Activated CD8-positive, alpha-beta T cell treated with anti-CD3 and anti-CD28 coated beads for 36 hours (primary cell): ENCODE measurements at regions of chr1 and their contacts with region 1.

Region 1: GRCh38 chr1:10494754-10495474 is 20.2 kb downstream of the PEX14 start:
- DNase-seq: peak; percentile 91
- ATAC-seq: peak; percentile 91
- H3K4me3 Mint-ChIP-seq: peak overlapping the region; percentile 68
- H3K27ac Mint-ChIP-seq: peak overlapping the region; percentile 92
- H3K4me1 Mint-ChIP-seq: peaks cover 48% of the 10 kb centered on the region
- H3K27me3 Mint-ChIP-seq: no peaks in the 10 kb centered on the region
- CTCF ChIP-seq: peak; percentile 99

Region 2: DNA sequence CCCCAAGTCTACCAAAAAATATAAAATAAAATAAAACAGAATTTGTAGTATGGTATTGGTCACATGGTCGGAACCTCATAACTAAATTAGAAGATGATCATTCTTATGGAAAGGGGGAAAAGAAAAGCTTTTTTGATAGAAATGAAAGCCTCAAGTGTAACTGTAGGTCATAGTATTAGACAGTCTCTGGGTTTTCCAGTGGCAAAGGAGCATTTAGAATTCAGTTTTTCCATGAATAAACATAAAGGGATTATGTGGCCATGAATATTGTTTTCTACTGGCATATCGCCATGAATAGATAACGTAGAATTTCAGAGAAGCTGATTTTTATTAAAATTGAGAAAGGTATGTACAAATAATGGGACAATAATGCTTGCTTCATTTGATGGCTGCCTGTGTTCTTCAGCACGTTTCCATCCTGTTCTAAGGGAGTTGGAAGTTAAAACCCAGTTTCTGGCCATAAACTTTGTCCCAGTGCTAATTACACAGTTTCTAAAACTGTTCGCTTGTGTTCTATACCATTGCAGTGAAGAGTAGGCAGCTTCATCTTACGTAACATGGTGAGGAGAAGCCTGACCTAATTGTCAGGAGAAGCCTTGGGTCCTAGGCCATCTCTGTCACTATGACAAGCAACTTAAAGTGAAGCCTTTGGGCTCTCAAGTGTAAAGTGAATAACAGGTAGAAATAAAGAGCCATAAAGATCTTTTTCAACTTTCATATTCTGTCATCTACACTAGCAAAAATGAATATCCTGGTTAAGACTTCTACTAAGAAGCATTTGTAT is 166.5 kb before region 1 on chr1:
- CTCF ChIA-PET with region 1: no interaction called
- POLR2A ChIA-PET with region 1: no interaction called
- intact Hi-C with region 1: no loop called
- DNase-seq: no peak
- ATAC-seq: no peak
- H3K4me3 Mint-ChIP-seq: no peak overlapping the region
- H3K27ac Mint-ChIP-seq: no peak overlapping the region
- H3K4me1 Mint-ChIP-seq: no peaks in the 10 kb centered on the region
- H3K27me3 Mint-ChIP-seq: no peaks in the 10 kb centered on the region
- CTCF ChIP-seq: no peak

Region 3: GRCh38 chr1:10430216-10431069 is 64.5 kb before region 1 on chr1 and contains the start of gene CENPS:
- CTCF ChIA-PET with region 1: interaction called, 100 read pairs
- POLR2A ChIA-PET with region 1: interaction called, 5 read pairs
- intact Hi-C with region 1: loop called (anchors 10 kb)
- DNase-seq: peak; percentile 95
- ATAC-seq: peak; percentile 90
- H3K4me3 Mint-ChIP-seq: peak within 1 kb of the TSS; percentile 88
- H3K27ac Mint-ChIP-seq: peak within 1 kb of the TSS; percentile 94
- H3K4me1 Mint-ChIP-seq: peaks cover 16% of the 10 kb centered on the region
- H3K27me3 Mint-ChIP-seq: no peaks in the 10 kb centered on the region
- CTCF ChIP-seq: peak; percentile 98
- total RNA-seq, gene CENPS: 18.3 to 19.4 TPM

Region 4: DNA sequence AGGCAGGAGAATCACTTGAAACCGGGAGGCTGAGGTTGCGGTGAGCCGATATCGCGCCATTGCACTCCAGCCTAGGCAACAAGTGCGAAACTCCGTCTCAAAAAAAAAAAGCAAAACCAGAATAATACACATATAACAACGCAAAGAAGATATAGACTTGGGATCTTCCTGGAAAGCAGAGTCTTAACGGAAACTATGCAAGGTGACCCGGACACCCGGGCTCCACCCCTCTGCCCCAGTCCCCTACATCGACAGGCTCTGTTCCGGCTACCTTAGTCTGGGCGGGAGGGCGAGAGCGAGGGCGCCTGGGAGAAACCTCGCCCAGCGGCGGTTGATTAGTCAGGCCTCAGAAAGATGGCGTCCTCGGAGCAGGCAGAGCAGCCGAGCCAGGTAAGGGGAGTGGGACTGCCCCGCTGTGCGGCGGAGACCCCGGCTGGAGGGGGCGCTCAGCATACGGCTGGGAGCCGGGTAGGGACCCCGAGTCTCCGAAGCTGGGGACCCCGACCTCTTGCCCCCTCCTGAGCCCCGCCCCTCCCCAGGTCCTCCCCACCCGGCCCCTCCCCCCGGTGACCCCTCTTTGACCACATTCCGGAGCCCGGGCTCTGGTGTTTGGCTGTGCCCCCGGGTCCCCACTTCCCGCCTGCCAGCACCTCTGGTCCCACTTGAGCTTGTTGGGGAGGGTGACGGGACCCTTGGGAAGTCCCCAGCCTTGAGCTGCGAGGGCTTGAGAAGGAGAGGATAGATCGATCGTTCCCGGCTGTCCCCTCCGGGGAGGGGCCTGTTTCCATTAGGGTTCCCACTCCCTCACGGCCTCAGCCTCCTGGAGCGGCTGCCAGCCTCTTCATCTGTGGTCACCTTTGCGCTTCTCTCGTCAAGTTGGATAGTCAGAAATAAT is 20.1 kb before region 1 on chr1 and contains the start of gene PEX14:
- CTCF ChIA-PET with region 1: interaction called, 32 read pairs
- POLR2A ChIA-PET with region 1: interaction called, 10 read pairs
- intact Hi-C with region 1: no loop called
- DNase-seq: peak; percentile 94
- ATAC-seq: peak; percentile 86
- H3K4me3 Mint-ChIP-seq: peak within 1 kb of the TSS; percentile 83
- H3K27ac Mint-ChIP-seq: peak within 1 kb of the TSS; percentile 90
- H3K4me1 Mint-ChIP-seq: peaks cover 42% of the 10 kb centered on the region
- H3K27me3 Mint-ChIP-seq: no peaks in the 10 kb centered on the region
- CTCF ChIP-seq: no peak
- total RNA-seq, gene PEX14: 18.0 to 18.5 TPM

Region 5: GRCh38 chr1:10507111-10507879 is 12.4 kb after region 1 on chr1:
- CTCF ChIA-PET with region 1: interaction called, 202 read pairs
- POLR2A ChIA-PET with region 1: interaction called, 15 read pairs
- intact Hi-C with region 1: no loop called
- DNase-seq: peak; percentile 69
- ATAC-seq: peak; percentile 57
- H3K4me3 Mint-ChIP-seq: no peak overlapping the region
- H3K27ac Mint-ChIP-seq: no peak overlapping the region
- H3K4me1 Mint-ChIP-seq: peaks cover 42% of the 10 kb centered on the region
- H3K27me3 Mint-ChIP-seq: no peaks in the 10 kb centered on the region
- CTCF ChIP-seq: peak; percentile 88

Region 6: DNA sequence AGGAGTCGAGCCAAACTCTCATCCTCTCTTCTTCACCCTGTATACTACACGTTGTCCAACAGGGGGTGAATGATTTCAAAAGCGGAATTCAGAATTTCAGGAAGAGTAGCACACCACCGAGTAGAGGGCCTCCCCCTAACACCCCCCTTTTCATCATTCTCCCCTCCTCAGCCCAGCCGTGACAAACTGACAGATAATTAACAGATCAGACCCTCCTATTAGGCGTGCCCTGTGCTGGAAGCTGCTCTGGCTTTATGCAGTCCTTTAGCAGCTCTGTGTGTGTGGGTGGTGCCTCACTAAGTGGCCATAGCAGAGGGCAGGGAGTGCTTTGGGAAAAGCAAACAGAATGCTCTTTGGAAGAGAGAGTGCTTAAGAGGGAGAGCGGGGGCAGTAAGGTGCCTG is 24.1 kb after region 1 on chr1:
- CTCF ChIA-PET with region 1: interaction called, 202 read pairs
- POLR2A ChIA-PET with region 1: interaction called, 3 read pairs
- intact Hi-C with region 1: no loop called
- DNase-seq: no peak
- ATAC-seq: no peak
- H3K4me3 Mint-ChIP-seq: no peak overlapping the region
- H3K27ac Mint-ChIP-seq: no peak overlapping the region
- H3K4me1 Mint-ChIP-seq: peaks cover 64% of the 10 kb centered on the region
- H3K27me3 Mint-ChIP-seq: no peaks in the 10 kb centered on the region
- CTCF ChIP-seq: no peak

Region 7: DNA sequence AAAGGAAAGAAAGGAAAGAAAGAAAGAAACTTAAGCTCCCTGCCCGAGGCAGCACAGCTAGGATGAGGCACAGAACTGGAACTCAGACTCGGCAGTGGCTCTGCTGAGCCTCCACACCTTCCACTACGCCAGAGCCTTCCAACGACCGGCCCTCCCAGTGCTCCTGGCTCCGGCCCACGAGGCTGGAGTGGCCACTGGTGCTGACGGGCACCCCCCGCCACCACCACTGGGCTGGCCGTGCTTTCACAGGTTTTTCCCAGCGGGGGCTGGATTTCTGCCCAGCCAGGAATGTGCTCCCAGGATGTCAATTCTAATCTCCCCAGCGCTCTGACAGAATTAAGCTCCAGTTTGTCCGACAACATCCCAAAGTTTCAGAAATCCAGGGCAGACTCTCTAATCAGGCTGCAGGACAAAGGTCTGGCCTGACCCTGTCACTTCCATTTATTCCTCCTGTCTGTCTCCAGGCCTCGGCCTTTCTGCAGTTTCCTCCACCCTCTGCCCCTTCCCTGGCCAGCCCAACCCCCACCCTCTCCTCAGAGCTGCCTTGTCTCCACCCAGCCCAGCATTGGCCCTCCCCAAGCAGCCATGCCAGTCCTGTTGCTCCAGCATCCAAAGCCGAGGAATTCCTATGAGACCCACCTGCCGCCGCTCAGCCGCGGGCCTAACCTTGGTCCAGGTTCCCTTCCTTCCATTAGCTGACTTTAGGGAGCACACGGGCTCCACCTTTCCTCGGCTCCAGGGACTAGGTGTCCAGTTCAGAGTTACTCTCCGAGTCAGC is 219.6 kb after region 1 on chr1:
- CTCF ChIA-PET with region 1: no interaction called
- POLR2A ChIA-PET with region 1: no interaction called
- intact Hi-C with region 1: no loop called
- DNase-seq: no peak
- ATAC-seq: no peak
- H3K4me3 Mint-ChIP-seq: no peak overlapping the region
- H3K27ac Mint-ChIP-seq: no peak overlapping the region
- H3K4me1 Mint-ChIP-seq: no peaks in the 10 kb centered on the region
- H3K27me3 Mint-ChIP-seq: peaks cover 4% of the 10 kb centered on the region
- CTCF ChIP-seq: no peak

Region 8: GRCh38 chr1:10909697-10910671 is 415.1 kb after region 1 on chr1:
- CTCF ChIA-PET with region 1: interaction called, 16 read pairs
- POLR2A ChIA-PET with region 1: no interaction called
- intact Hi-C with region 1: no loop called
- DNase-seq: peak; percentile 88
- ATAC-seq: peak; percentile 93
- H3K4me3 Mint-ChIP-seq: no peak overlapping the region
- H3K27ac Mint-ChIP-seq: no peak overlapping the region
- H3K4me1 Mint-ChIP-seq: peaks cover 16% of the 10 kb centered on the region
- H3K27me3 Mint-ChIP-seq: peaks cover 2% of the 10 kb centered on the region
- CTCF ChIP-seq: peak; percentile 85